HCT116 (cell line): ENCODE measurements at regions of chr11 and their contacts with region 1.

Region 1: GRCh38 chr11:128884703-128885338 is 6.3 kb upstream of the KCNJ5 start:
- DNase-seq: peak; percentile 63
- ATAC-seq: peak; percentile 82
- H3K4me3 ChIP-seq: no peak overlapping the region
- H3K27ac ChIP-seq: no peak overlapping the region
- H3K4me1 ChIP-seq: peaks cover 0 to under 1% of the 10 kb centered on the region in 2 experiments; a peak in 1 of 4 replicates
- H3K27me3 ChIP-seq: no peaks in the 10 kb centered on the region
- CTCF ChIP-seq: peak; percentile 62 to 95 (median 81); a peak in 5 of 6 replicates
- POLR2A ChIP-seq: no peak
- RAD21 ChIP-seq: peak; percentile 98

Region 2: GRCh38 chr11:128725630-128726319 is 159.0 kb before region 1 on chr11:
- CTCF ChIA-PET with region 1: no interaction called
- POLR2A ChIA-PET with region 1: no interaction called
- RAD21 ChIA-PET with region 1: no interaction called
- intact Hi-C with region 1: no loop called
- DNase-seq: no peak
- ATAC-seq: no peak
- H3K4me3 ChIP-seq: no peak overlapping the region
- H3K27ac ChIP-seq: no peak overlapping the region
- H3K4me1 ChIP-seq: no peaks in the 10 kb centered on the region
- H3K27me3 ChIP-seq: peaks cover 60% of the 10 kb centered on the region
- CTCF ChIP-seq: no peak
- POLR2A ChIP-seq: no peak
- RAD21 ChIP-seq: no peak

Region 3: GRCh38 chr11:128948589-128948988 is 63.8 kb after region 1 on chr11:
- CTCF ChIA-PET with region 1: interaction called, 61 read pairs
- POLR2A ChIA-PET with region 1: no interaction called
- RAD21 ChIA-PET with region 1: interaction called, 4 to 5 read pairs
- intact Hi-C with region 1: no loop called
- DNase-seq: no peak
- ATAC-seq: peak; percentile 78
- H3K4me3 ChIP-seq: no peak overlapping the region
- H3K27ac ChIP-seq: no peak overlapping the region
- H3K4me1 ChIP-seq: no peaks in the 10 kb centered on the region
- H3K27me3 ChIP-seq: no peaks in the 10 kb centered on the region
- CTCF ChIP-seq: peak; percentile 29 to 53 (median 39); a peak in 4 of 6 replicates
- POLR2A ChIP-seq: no peak
- RAD21 ChIP-seq: peak; percentile 67

Region 4: GRCh38 chr11:128962896-128963295 is 78.1 kb after region 1 on chr11:
- CTCF ChIA-PET with region 1: interaction called, 213 read pairs
- POLR2A ChIA-PET with region 1: no interaction called
- RAD21 ChIA-PET with region 1: no interaction called
- intact Hi-C with region 1: no loop called
- DNase-seq: no peak
- ATAC-seq: no peak
- H3K4me3 ChIP-seq: no peak overlapping the region
- H3K27ac ChIP-seq: no peak overlapping the region
- H3K4me1 ChIP-seq: no peaks in the 10 kb centered on the region
- H3K27me3 ChIP-seq: no peaks in the 10 kb centered on the region
- CTCF ChIP-seq: no peak
- POLR2A ChIP-seq: no peak
- RAD21 ChIP-seq: no peak

Region 5: DNA sequence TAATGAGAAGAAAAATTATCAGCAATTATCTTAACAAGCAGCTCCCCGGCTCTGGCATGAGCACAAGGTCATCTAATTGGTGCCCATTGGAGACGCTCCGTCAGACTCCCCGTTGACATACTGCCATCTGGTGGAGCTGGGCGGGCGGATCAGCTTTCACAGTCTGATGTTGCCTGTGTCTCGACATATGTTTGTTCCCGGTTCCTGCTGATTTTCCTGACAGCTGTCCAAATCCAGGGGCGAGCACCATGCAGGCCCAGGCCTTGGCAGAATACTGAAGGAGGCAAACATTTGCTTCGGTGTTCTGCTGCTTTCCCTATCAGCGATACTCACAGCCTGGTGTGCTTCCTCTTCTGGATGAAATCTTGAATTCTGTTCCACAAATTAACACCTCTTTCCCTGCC is 447.1 kb after region 1 on chr11:
- CTCF ChIA-PET with region 1: interaction called, 7 read pairs
- POLR2A ChIA-PET with region 1: no interaction called
- RAD21 ChIA-PET with region 1: interaction called in 1 of 2 experiments, 3 read pairs
- intact Hi-C with region 1: loop called (anchors 5 kb)
- DNase-seq: peak; percentile 79
- ATAC-seq: peak; percentile 94
- H3K4me3 ChIP-seq: no peak overlapping the region
- H3K27ac ChIP-seq: no peak overlapping the region
- H3K4me1 ChIP-seq: peaks cover 0 to 3% of the 10 kb centered on the region in 2 experiments; a peak in 1 of 4 replicates
- H3K27me3 ChIP-seq: no peaks in the 10 kb centered on the region
- CTCF ChIP-seq: peak; percentile 83 to 94 (median 86)
- POLR2A ChIP-seq: no peak
- RAD21 ChIP-seq: peak; percentile 100